Tibial artery (tissue), 4 donors: ENCODE measurements at regions of chr10 and their contacts with region 1.

Region 1: GRCh38 chr10:60964257-60965235 is 20.6 kb upstream of the RHOBTB1 start:
- DNase-seq: peak; percentile 63 to 77
- H3K4me3 ChIP-seq: no peak overlapping the region
- H3K27ac ChIP-seq: peak overlapping the region; percentile 4 to 55
- H3K4me1 ChIP-seq: peaks cover 0 to 14% (median 5%) of the 10 kb centered on the region in 4 donors
- H3K27me3 ChIP-seq: no peaks in the 10 kb centered on the region
- CTCF ChIP-seq: peak; percentile 76 to 78

Region 2: GRCh38 chr10:60848126-60848525 is 116.4 kb before region 1 on chr10:
- intact Hi-C with region 1: no loop called
- DNase-seq: no peak
- H3K4me3 ChIP-seq: no peak overlapping the region
- H3K27ac ChIP-seq: peak overlapping the region; percentile 20 to 45
- H3K4me1 ChIP-seq: peaks cover 0 to 43% (median 18%) of the 10 kb centered on the region in 4 donors
- H3K27me3 ChIP-seq: no peaks in the 10 kb centered on the region
- CTCF ChIP-seq: peak in 1 of 2 experiments; percentile 13

Region 3: DNA sequence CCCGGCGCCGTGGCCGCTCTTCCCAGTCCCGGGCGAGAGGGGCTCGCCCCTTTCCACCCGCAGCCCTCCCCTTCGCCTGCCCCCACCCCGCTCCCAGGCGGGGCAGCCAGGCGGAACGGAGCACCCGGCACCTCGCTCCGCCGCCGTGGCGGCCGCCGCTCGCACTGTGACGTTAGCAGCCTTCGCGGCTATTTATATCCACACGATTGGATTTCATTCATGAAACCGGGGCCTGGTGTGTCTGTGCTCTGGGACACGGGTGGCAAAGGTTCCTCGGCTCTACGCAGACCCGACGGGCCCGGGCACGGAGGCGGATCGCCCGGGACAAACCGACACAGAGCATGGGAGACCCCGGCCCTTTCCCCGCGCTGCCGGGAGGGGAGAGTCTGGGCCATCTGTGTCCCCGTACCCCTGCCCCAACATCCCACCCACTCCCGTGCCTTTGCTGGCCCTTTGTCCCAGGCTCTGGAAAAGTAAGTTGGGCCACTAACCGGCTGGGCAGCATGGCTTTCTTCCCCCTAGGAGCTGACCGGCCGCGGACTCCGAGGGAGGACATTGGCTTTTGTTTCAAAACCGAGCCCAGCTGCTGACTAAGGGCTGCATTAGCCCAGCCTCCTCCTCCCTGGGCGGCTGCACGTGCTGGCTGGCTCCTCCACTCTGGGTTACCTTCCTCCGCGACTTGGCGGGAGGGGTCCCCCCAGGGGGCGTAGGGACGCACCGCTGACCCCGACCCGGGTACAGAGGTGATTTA is 20.2 kb before region 1 on chr10 and contains the start of gene RHOBTB1:
- intact Hi-C with region 1: loop called (anchors 2 kb)
- DNase-seq: peak; percentile 78 to 91
- H3K4me3 ChIP-seq: peak within 1 kb of the TSS; percentile 81 to 87
- H3K27ac ChIP-seq: peak within 1 kb of the TSS; percentile 97 to 99
- H3K4me1 ChIP-seq: peaks cover 0 to 24% (median 10%) of the 10 kb centered on the region in 4 donors
- H3K27me3 ChIP-seq: no peaks in the 10 kb centered on the region
- CTCF ChIP-seq: no peak

Region 4: GRCh38 chr10:61159253-61159652 is 194.7 kb after region 1 on chr10:
- intact Hi-C with region 1: no loop called
- DNase-seq: no peak
- H3K4me3 ChIP-seq: no peak overlapping the region
- H3K27ac ChIP-seq: no peak overlapping the region
- H3K4me1 ChIP-seq: peaks cover 0 to 12% (median 5%) of the 10 kb centered on the region in 4 donors
- H3K27me3 ChIP-seq: no peaks in the 10 kb centered on the region
- CTCF ChIP-seq: no peak

Region 5: GRCh38 chr10:61284222-61284890 is 319.8 kb after region 1 on chr10:
- intact Hi-C with region 1: loop called (anchors 5 kb)
- DNase-seq: no peak
- H3K4me3 ChIP-seq: no peak overlapping the region
- H3K27ac ChIP-seq: peak overlapping the region in 1 of 2 donors; percentile 23
- H3K4me1 ChIP-seq: peaks cover 0 to 5% (median 0%) of the 10 kb centered on the region in 4 donors
- H3K27me3 ChIP-seq: no peaks in the 10 kb centered on the region
- CTCF ChIP-seq: peak; percentile 77 to 79